ENCODE measurements at regions of chr18 and their contacts with region 1.

Region 1: GRCh38 chr18:33210575-33211189 is 229.8 kb downstream of the CCDC178 start:
- DNase-seq: peak in 1 of 2 experiments; percentile 24
- ATAC-seq: 0 out of 6 replicates have a peak, but pooled peaks of 1 of the 2 experiments have one; percentile 40
- H3K4me3 ChIP-seq: no peak overlapping the region
- H3K27ac ChIP-seq: no peak overlapping the region
- H3K4me1 ChIP-seq: no peaks in the 10 kb centered on the region
- CTCF ChIP-seq: peak; percentile 32; the same call in 2 of the 3 replicates
- EP300 ChIP-seq: no peak
- POLR2A ChIP-seq: no peak
- RAD21 ChIP-seq: peak in 1 of 2 experiments; percentile 22; a peak in 2 of 5 replicates

Region 2: GRCh38 chr18:33231474-33232317 is 21.0 kb after region 1 on chr18:
- CTCF ChIA-PET with region 1: interaction called, 10 read pairs
- POLR2A ChIA-PET with region 1: no interaction called
- DNase-seq: peak; percentile 11 to 54
- ATAC-seq: peak; percentile 66 to 79; a peak in 4 of 6 replicates
- H3K4me3 ChIP-seq: no peak overlapping the region
- H3K27ac ChIP-seq: no peak overlapping the region
- H3K4me1 ChIP-seq: no peaks in the 10 kb centered on the region
- CTCF ChIP-seq: peak; percentile 60
- EP300 ChIP-seq: no peak
- POLR2A ChIP-seq: no peak
- RAD21 ChIP-seq: peak; percentile 51 to 62

Region 3: DNA sequence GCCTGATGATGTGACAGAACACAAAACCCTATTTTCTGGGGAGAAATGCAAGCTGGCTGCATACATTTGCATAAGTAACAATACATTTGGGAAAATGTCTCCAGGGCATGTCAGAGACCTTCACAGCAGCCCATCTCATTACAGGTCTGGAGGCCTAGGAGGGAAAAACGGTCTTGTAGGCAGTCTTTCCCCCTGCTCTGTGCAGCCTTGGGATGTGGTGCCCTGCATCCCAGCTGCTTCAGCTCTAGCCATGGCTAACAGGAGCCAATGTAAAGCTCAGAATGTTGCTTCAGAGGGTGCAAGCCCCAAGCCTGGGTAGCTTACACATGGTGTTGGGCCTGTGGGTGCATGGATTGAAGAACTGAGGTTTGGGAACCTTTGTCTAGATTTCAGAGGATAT is 96.8 kb after region 1 on chr18:
- CTCF ChIA-PET with region 1: no interaction called
- POLR2A ChIA-PET with region 1: no interaction called
- DNase-seq: no peak
- ATAC-seq: no peak
- H3K4me3 ChIP-seq: no peak overlapping the region
- H3K27ac ChIP-seq: no peak overlapping the region
- H3K4me1 ChIP-seq: no peaks in the 10 kb centered on the region
- CTCF ChIP-seq: no peak
- EP300 ChIP-seq: no peak
- POLR2A ChIP-seq: no peak
- RAD21 ChIP-seq: no peak

Region 4: DNA sequence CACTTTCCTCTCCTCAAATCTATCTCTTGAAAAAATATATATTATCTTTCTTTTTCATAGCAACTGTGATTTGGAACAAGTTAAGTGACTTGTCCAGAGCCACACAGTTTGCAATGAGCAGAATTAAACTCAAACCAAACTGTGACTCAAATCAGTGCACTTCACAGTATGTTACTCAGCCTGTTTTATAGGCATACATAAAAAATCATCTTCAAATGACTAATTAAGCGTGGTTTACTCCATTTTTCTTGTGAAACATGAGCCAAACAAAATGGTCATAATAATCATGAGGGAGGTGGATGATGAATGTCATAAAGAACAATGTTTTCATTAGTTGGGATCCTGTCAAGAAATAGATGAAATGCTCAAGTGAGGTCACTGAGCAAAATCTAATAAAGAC is 235.9 kb after region 1 on chr18:
- CTCF ChIA-PET with region 1: no interaction called
- POLR2A ChIA-PET with region 1: no interaction called
- DNase-seq: no peak
- ATAC-seq: no peak
- H3K4me3 ChIP-seq: no peak overlapping the region
- H3K27ac ChIP-seq: no peak overlapping the region
- H3K4me1 ChIP-seq: no peaks in the 10 kb centered on the region
- CTCF ChIP-seq: no peak
- EP300 ChIP-seq: no peak
- POLR2A ChIP-seq: no peak
- RAD21 ChIP-seq: no peak